ENCODE measurements at regions of chr6 and their contacts with region 1.

Region 1: DNA sequence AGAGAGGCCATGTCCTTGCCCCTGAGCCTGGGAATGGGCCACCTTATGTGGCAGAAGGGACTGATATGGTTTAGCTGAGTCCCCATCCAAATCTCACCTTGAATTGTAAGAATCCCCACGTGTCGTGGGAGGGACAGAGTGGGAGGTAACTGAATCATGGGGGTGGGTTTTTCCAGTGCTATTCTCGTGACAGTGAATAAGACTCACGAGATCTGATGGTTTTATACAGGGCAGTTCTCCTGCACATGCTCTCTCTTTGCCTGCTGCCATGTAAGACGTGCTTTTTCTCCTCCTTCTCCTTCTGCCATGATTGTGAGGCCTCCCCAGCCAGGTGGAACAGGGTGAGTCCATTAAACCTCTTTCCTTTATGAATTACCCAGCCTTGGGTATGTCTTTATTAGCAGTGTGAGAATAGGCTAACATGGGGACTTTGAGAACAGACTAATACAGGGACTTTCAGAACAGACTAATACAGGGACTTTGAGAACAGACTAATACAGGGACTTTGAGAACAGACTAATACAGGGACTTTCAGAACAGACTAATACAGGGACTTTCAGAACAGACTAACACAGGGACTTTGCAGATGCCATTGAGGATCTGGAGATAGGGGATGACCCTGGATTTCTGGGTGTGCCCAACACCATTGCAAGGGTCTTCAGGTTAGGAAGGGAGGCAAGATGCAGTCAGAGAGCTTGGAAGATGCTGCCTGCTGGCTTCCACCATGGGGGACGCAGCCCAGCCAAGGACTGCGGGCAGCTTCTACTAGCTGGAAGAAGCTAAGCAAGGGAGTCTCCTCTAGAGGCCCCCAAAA is 86.9 kb downstream of the RAMACL start:
- DNase-seq: peak in 1 of 10 donors; percentile 23
- H3K4me3 ChIP-seq: no peak overlapping the region
- H3K27ac ChIP-seq: peak overlapping the region in 48 of 59 donors; percentile 3 to 89 (median 69)
- H3K27me3 ChIP-seq: no peaks in the 10 kb centered on the region
- CTCF ChIP-seq: no peak

Region 2: GRCh38 chr6:166419286-166419685 is 80.3 kb before region 1 on chr6:
- intact Hi-C with region 1: loop called in 1 of 2 experiments (anchors 5 kb)
- DNase-seq: peak in 1 of 10 donors; percentile 30
- H3K4me3 ChIP-seq: no peak overlapping the region
- H3K27ac ChIP-seq: peak overlapping the region in 5 of 59 donors; percentile 7 to 89 (median 11)
- H3K27me3 ChIP-seq: no peaks in the 10 kb centered on the region
- CTCF ChIP-seq: no peak